ENCODE measurements at regions of chr1 and their contacts with region 1.

Region 1: DNA sequence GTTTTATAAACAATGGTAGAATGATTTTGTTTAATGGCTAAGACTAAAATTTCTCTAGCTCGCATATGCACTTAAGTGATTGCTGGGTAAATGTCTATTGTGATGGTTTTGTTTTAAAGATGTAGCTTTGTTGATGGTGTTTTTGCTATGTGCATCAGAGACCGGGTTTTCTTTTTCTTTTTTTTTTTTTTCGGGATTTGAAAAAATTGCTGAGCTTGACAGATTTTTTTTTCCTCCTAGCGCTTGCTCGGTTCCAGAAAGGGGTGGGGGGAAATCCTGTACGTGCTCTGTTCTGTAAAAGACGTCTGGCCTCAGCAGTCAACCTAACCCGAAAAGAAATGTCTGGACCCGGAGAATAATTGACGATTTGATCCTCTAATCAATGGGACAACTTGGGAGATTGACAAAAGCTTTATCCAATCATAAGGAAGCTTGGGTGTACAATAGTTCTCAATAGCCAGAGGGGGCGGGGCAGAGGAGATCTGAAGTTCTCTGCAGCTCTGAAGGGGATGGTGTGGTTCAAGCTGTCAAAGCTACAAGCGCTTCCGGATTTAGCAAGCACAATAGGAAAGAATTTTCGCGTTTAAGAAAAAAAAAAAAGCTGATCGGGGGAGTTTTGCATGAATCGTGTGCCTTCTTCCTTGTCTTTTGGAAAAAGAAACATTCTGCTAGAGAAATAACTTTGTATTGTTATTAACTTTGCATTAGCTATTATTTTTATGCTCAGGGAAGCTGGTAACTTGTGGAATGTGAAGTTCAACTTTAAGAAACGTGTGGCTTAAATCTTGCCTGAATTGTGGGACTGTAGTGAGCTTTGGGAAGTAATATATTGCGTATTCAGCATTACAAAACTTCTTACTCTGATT is 4.5 kb upstream of the NFIA start:
- DNase-seq: peak; percentile 93 to 97 (median 96)
- H3K4me3 ChIP-seq: peak overlapping the region; percentile 47 to 73
- H3K4me3 Mint-ChIP-seq: peak overlapping the region; percentile 91 to 98 (median 94)
- H3K27ac ChIP-seq: peak overlapping the region; percentile 68
- H3K27ac Mint-ChIP-seq: peak overlapping the region; percentile 91 to 99 (median 98)
- H3K4me1 ChIP-seq: peaks cover 45% of the 10 kb centered on the region
- H3K4me1 Mint-ChIP-seq: peaks cover 30 to 62% (median 40%) of the 10 kb centered on the region in 4 donors
- H3K27me3 ChIP-seq: no peaks in the 10 kb centered on the region
- H3K27me3 Mint-ChIP-seq: peaks cover 0 to 2% of the 10 kb centered on the region in 2 donors

Region 2: GRCh38 chr1:60978421-60979357 is 99.2 kb before region 1 on chr1:
- CTCF ChIA-PET with region 1: no interaction called
- POLR2A ChIA-PET with region 1: no interaction called
- intact Hi-C with region 1: no loop called
- DNase-seq: peak in 4 of 5 donors; percentile 20 to 34 (median 22)
- H3K4me3 ChIP-seq: no peak overlapping the region
- H3K4me3 Mint-ChIP-seq: no peak overlapping the region
- H3K27ac ChIP-seq: no peak overlapping the region
- H3K27ac Mint-ChIP-seq: no peak overlapping the region
- H3K4me1 ChIP-seq: no peaks in the 10 kb centered on the region
- H3K4me1 Mint-ChIP-seq: no peaks in the 10 kb centered on the region
- H3K27me3 ChIP-seq: no peaks in the 10 kb centered on the region
- H3K27me3 Mint-ChIP-seq: peaks cover 2 to 4% of the 10 kb centered on the region in 2 donors

Region 3: GRCh38 chr1:61005614-61006580 is 72.0 kb before region 1 on chr1:
- CTCF ChIA-PET with region 1: no interaction called
- POLR2A ChIA-PET with region 1: no interaction called
- intact Hi-C with region 1: no loop called
- DNase-seq: no peak
- H3K4me3 ChIP-seq: no peak overlapping the region
- H3K4me3 Mint-ChIP-seq: no peak overlapping the region
- H3K27ac ChIP-seq: no peak overlapping the region
- H3K27ac Mint-ChIP-seq: no peak overlapping the region
- H3K4me1 ChIP-seq: no peaks in the 10 kb centered on the region
- H3K4me1 Mint-ChIP-seq: no peaks in the 10 kb centered on the region
- H3K27me3 ChIP-seq: no peaks in the 10 kb centered on the region
- H3K27me3 Mint-ChIP-seq: peaks cover 5 to 20% of the 10 kb centered on the region in 2 donors

Region 4: DNA sequence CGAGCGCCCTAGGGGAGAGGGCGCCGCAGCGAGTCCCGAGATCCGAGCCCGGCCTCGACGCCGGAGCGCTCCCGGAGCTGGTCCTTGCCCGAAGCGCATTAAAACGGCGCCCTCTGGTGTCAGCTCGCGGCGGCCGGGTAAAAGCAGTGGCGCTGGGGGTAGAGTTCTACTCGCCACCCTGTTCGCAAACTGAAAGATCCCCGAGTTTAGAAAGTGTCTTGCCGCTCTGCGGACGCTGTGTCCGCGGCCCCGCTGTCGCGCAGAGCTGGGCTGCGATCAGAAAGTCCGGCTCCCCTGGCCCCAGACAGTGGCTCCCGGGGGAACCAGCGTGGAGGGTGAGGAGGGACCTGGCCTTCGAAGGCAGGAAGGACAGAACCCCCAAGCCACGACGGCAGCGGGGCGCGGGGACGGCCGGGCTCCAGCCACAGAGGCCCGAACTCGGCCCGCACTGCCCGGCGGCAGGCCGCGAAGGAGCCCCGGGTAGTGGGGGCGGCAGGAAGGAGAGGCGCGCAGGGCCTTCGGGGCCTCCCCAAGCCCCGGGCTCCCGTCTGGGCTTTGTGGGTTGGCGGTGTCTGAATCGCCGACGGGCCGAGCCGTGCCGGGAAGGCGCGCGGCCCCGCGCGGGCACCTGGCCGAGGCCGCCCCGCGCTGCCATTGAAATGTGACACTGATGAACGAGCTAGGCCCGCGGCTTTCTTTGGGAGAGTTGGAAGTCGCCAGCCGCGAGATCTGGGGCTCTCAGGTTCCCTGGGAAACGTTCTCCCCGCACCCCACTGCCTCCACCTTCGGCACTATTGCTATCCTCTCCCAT is 34.7 kb before region 1 on chr1:
- CTCF ChIA-PET with region 1: interaction called, 84 read pairs
- POLR2A ChIA-PET with region 1: interaction called, 62 read pairs
- intact Hi-C with region 1: no loop called
- DNase-seq: peak; percentile 73 to 81 (median 76)
- H3K4me3 ChIP-seq: peak overlapping the region in 1 of 2 donors; percentile 43
- H3K4me3 Mint-ChIP-seq: peak overlapping the region; percentile 74 to 88 (median 82)
- H3K27ac ChIP-seq: no peak overlapping the region
- H3K27ac Mint-ChIP-seq: peak overlapping the region in 1 of 7 donors; percentile 48
- H3K4me1 ChIP-seq: peaks cover 6% of the 10 kb centered on the region
- H3K4me1 Mint-ChIP-seq: peaks cover 0 to 7% (median under 1%) of the 10 kb centered on the region in 4 donors
- H3K27me3 ChIP-seq: no peaks in the 10 kb centered on the region
- H3K27me3 Mint-ChIP-seq: peaks cover 20 to 25% of the 10 kb centered on the region in 2 donors

Region 5: GRCh38 chr1:61093525-61094137 is 15.7 kb after region 1 on chr1:
- CTCF ChIA-PET with region 1: interaction called, 8 read pairs
- POLR2A ChIA-PET with region 1: interaction called, 4 read pairs
- intact Hi-C with region 1: loop called (anchors 2 kb)
- DNase-seq: no peak
- H3K4me3 ChIP-seq: no peak overlapping the region
- H3K4me3 Mint-ChIP-seq: no peak overlapping the region
- H3K27ac ChIP-seq: no peak overlapping the region
- H3K27ac Mint-ChIP-seq: no peak overlapping the region
- H3K4me1 ChIP-seq: no peaks in the 10 kb centered on the region
- H3K4me1 Mint-ChIP-seq: peaks cover 0 to 9% (median 3%) of the 10 kb centered on the region in 4 donors
- H3K27me3 ChIP-seq: no peaks in the 10 kb centered on the region
- H3K27me3 Mint-ChIP-seq: peaks cover 0 to 4% of the 10 kb centered on the region in 2 donors

Region 6: GRCh38 chr1:61133002-61133661 is 55.2 kb after region 1 on chr1:
- CTCF ChIA-PET with region 1: no interaction called
- POLR2A ChIA-PET with region 1: no interaction called
- intact Hi-C with region 1: no loop called
- DNase-seq: no peak
- H3K4me3 ChIP-seq: no peak overlapping the region
- H3K4me3 Mint-ChIP-seq: no peak overlapping the region
- H3K27ac ChIP-seq: no peak overlapping the region
- H3K27ac Mint-ChIP-seq: peak overlapping the region in 1 of 7 donors; percentile 8
- H3K4me1 ChIP-seq: no peaks in the 10 kb centered on the region
- H3K4me1 Mint-ChIP-seq: peaks cover 5 to 7% (median 6%) of the 10 kb centered on the region in 4 donors
- H3K27me3 ChIP-seq: no peaks in the 10 kb centered on the region
- H3K27me3 Mint-ChIP-seq: peaks cover 2 to 3% of the 10 kb centered on the region in 2 donors

Region 7: DNA sequence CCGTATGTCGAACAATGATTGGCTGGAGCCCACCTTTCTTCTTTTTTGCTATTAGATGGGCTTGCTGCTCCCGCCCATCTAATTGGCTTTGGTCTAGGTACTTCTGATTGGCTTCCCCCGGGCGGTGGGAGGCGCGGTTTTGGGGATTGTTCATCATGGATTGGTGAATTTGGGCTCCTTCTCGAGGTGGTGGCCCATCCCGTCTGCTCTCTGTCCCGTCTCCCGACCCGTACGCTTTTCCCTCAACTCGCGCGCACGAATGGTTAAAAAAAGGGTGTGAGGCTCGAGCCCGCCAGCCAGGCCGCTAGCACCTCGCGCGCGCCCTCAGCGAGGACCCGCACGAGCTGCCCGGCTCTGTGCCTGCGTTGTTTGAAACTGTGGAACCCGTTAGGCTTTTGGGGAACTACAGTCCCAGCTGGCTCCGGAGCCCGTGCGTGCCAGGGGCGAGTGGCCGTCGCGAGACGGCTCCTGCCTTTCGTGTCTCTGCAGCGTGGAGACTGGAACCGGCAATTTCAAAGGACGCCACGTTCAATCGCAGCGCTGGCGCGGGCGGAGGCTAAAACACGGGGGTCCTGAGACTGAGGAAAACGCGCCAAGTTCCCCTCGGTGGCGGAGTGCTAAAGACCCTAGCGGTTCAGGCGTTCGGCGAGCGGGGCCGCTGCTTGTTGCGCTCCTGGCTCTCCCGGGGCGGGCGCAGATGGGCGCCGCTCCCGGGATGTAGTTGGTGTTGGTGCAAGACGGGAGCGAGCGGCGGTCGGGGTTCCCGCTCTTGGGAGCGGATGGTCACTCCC is 1358.8 kb after region 1 on chr1 and contains the start of gene USP1:
- CTCF ChIA-PET with region 1: no interaction called
- POLR2A ChIA-PET with region 1: no interaction called
- intact Hi-C with region 1: loop called (anchors 2 kb)
- DNase-seq: peak in 4 of 5 donors; percentile 98 to 100 (median 99)
- H3K4me3 ChIP-seq: peak within 1 kb of the TSS; percentile 84 to 97
- H3K4me3 Mint-ChIP-seq: peak within 1 kb of the TSS; percentile 87 to 97 (median 96)
- H3K27ac ChIP-seq: peak within 1 kb of the TSS; percentile 97
- H3K27ac Mint-ChIP-seq: peak within 1 kb of the TSS; percentile 97 to 100 (median 99)
- H3K4me1 ChIP-seq: peaks cover 43% of the 10 kb centered on the region
- H3K4me1 Mint-ChIP-seq: peaks cover 24 to 57% (median 36%) of the 10 kb centered on the region in 4 donors
- H3K27me3 ChIP-seq: no peaks in the 10 kb centered on the region
- H3K27me3 Mint-ChIP-seq: peaks cover 0 to 2% of the 10 kb centered on the region in 2 donors
- total RNA-seq, gene USP1: 46.3 to 50.0 TPM

Measured in CD4-positive, alpha-beta memory T cell (primary cell).